Prostate gland (tissue), 2 donors: ENCODE measurements at regions of chr17 and their contacts with region 1.

Region 1: DNA sequence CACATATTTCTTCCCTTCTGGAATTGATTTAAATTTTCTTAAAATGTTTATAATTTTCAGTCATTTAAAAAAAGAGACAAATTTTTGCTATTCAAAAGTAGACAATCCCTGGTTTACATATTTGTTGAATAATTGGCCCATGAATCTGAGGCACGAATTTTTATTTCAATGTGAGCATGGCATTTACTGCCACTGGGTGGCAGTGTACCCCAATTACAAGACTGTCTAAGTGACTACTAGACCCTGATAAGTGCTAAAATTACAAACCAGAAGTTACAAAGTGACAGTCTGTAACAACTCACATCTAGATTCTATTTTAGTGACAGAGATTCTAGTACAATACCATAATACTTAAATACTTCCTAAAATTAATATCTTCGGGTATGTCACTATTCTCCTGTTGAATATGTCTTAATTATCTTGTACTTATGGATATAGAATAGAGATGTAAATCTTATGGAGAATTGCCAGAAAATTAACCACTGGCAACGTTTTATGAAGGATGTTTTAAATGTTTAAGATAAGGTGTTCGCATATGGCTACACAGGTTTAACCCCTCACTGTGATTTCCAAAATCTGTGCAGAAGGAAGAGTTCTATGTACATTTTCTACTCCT is 235.8 kb downstream of the MAP2K4 start:
- DNase-seq: peak; percentile 39
- H3K4me3 ChIP-seq: no peak overlapping the region
- H3K27ac ChIP-seq: no peak overlapping the region
- H3K4me1 ChIP-seq: no peaks in the 10 kb centered on the region
- H3K27me3 ChIP-seq: no peaks in the 10 kb centered on the region
- CTCF ChIP-seq: peak; percentile 43 to 85 (median 72)
- POLR2A ChIP-seq: no peak

Region 2: GRCh38 chr17:12180644-12181261 is 75.7 kb before region 1 on chr17:
- intact Hi-C with region 1: loop called (anchors 5 kb)
- DNase-seq: peak; percentile 30
- H3K4me3 ChIP-seq: no peak overlapping the region
- H3K27ac ChIP-seq: no peak overlapping the region
- H3K4me1 ChIP-seq: no peaks in the 10 kb centered on the region
- H3K27me3 ChIP-seq: no peaks in the 10 kb centered on the region
- CTCF ChIP-seq: peak; percentile 31 to 72 (median 68)
- POLR2A ChIP-seq: no peak

Region 3: DNA sequence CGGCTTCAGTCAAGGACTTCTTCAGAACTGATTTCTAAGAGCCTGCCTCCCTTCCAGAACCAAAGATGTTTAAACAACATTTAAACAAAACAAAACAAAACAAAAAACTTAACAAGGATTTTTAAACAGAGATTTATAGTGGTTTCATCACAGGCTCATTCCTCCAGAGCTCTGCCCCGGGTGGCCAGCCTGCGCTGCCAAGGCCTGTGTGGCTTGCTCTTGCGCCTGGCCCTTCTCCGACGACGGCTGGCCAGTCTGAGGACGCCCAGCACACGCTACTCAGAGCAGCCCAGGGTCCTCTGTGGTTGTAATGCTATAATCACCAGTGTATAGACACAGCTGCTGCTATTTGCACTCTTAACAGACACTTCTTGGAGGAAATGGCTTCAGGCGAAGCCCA is 102.0 kb after region 1 on chr17:
- intact Hi-C with region 1: no loop called
- DNase-seq: no peak
- H3K4me3 ChIP-seq: no peak overlapping the region
- H3K27ac ChIP-seq: no peak overlapping the region
- H3K4me1 ChIP-seq: no peaks in the 10 kb centered on the region
- H3K27me3 ChIP-seq: no peaks in the 10 kb centered on the region
- CTCF ChIP-seq: no peak
- POLR2A ChIP-seq: no peak

Region 4: GRCh38 chr17:12545877-12546513 is 289.5 kb after region 1 on chr17:
- intact Hi-C with region 1: loop called (anchors 10 kb)
- DNase-seq: no peak
- H3K4me3 ChIP-seq: no peak overlapping the region
- H3K27ac ChIP-seq: no peak overlapping the region
- H3K4me1 ChIP-seq: no peaks in the 10 kb centered on the region
- H3K27me3 ChIP-seq: no peaks in the 10 kb centered on the region
- CTCF ChIP-seq: peak in 3 of 4 experiments; percentile 36 to 60 (median 50)
- POLR2A ChIP-seq: no peak

Region 5: GRCh38 chr17:12667299-12667958 is 410.9 kb after region 1 on chr17:
- intact Hi-C with region 1: loop called (anchors 1 kb)
- DNase-seq: no peak
- H3K4me3 ChIP-seq: no peak overlapping the region
- H3K27ac ChIP-seq: peak overlapping the region; percentile 38 to 56
- H3K4me1 ChIP-seq: no peaks in the 10 kb centered on the region
- H3K27me3 ChIP-seq: peaks cover 3% of the 10 kb centered on the region
- CTCF ChIP-seq: peak in 3 of 4 experiments; percentile 47 to 57 (median 56)
- POLR2A ChIP-seq: no peak

Region 6: GRCh38 chr17:12730931-12731521 is 474.5 kb after region 1 on chr17:
- intact Hi-C with region 1: loop called (anchors 5 kb)
- DNase-seq: peak; percentile 15
- H3K4me3 ChIP-seq: no peak overlapping the region
- H3K27ac ChIP-seq: no peak overlapping the region
- H3K4me1 ChIP-seq: peaks cover 4% of the 10 kb centered on the region
- H3K27me3 ChIP-seq: no peaks in the 10 kb centered on the region
- CTCF ChIP-seq: no peak
- POLR2A ChIP-seq: no peak

Region 7: GRCh38 chr17:12992676-12993075 is 736.2 kb after region 1 on chr17:
- intact Hi-C with region 1: no loop called
- DNase-seq: no peak
- H3K4me3 ChIP-seq: no peak overlapping the region
- H3K27ac ChIP-seq: no peak overlapping the region
- H3K4me1 ChIP-seq: no peaks in the 10 kb centered on the region
- H3K27me3 ChIP-seq: no peaks in the 10 kb centered on the region
- CTCF ChIP-seq: no peak
- POLR2A ChIP-seq: no peak

Region 8: GRCh38 chr17:13002766-13003451 is 746.4 kb after region 1 on chr17:
- intact Hi-C with region 1: loop called (anchors 5 kb)
- DNase-seq: peak; percentile 68
- H3K4me3 ChIP-seq: no peak overlapping the region
- H3K27ac ChIP-seq: no peak overlapping the region
- H3K4me1 ChIP-seq: peaks cover 7% of the 10 kb centered on the region
- H3K27me3 ChIP-seq: no peaks in the 10 kb centered on the region
- CTCF ChIP-seq: peak; percentile 79 to 90 (median 81)
- POLR2A ChIP-seq: no peak